Activated CD4-positive, alpha-beta memory T cell treated with anti-CD3 and anti-CD28 coated beads, Interleukin-2, amount 10 ng/mL, durations not matched to agents 7 days and 5 days (primary cell): ENCODE measurements at regions of chr11 and their contacts with region 1.

Region 1: GRCh38 chr11:48172818-48173609 is 43.6 kb upstream of the OR4B1 start:
- DNase-seq: peak; percentile 70
- H3K4me3 Mint-ChIP-seq: no peak overlapping the region
- H3K27ac Mint-ChIP-seq: no peak overlapping the region
- H3K4me1 Mint-ChIP-seq: peaks cover 31% of the 10 kb centered on the region
- H3K27me3 Mint-ChIP-seq: no peaks in the 10 kb centered on the region

Region 2: DNA sequence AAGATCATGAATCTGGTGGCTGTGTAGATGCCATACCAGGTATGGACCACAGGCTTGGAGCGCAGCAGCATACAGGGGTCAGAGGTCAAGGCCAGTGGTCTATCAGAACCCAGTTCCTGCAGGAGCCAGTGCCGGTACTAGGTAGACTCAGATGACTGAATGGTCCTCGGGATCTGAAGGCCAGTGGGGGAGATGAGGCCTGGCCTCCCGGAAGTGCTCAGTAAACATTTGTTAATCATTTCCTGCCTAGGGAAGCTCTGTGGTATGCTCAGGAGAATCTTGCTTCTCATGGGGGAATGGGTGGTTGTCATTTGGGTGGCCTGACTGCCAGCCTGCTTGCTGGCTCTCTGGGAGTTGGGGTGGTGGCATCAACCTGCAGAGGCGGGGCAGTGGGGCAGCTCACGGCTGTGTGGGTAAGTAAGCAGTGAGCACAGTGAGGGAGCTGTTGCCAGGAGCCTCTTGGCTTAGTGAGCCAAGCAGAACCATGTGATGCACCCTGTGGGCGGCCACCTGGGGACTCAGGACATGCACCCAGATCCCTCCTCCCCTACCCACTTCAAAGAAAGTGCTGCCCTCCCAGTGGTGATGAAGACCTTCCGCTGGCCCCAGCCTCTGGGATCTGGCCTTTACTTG is 159.6 kb before region 1 on chr11:
- CTCF ChIA-PET with region 1: no interaction called
- POLR2A ChIA-PET with region 1: no interaction called
- DNase-seq: peak; percentile 83
- H3K4me3 Mint-ChIP-seq: peak overlapping the region; percentile 69
- H3K27ac Mint-ChIP-seq: peak overlapping the region; percentile 99
- H3K4me1 Mint-ChIP-seq: peaks cover 91% of the 10 kb centered on the region
- H3K27me3 Mint-ChIP-seq: no peaks in the 10 kb centered on the region

Region 3: GRCh38 chr11:48161951-48162884 is 10.8 kb before region 1 on chr11:
- CTCF ChIA-PET with region 1: no interaction called
- POLR2A ChIA-PET with region 1: no interaction called
- DNase-seq: no peak
- H3K4me3 Mint-ChIP-seq: no peak overlapping the region
- H3K27ac Mint-ChIP-seq: peak overlapping the region; percentile 1
- H3K4me1 Mint-ChIP-seq: no peaks in the 10 kb centered on the region
- H3K27me3 Mint-ChIP-seq: no peaks in the 10 kb centered on the region

Region 4: DNA sequence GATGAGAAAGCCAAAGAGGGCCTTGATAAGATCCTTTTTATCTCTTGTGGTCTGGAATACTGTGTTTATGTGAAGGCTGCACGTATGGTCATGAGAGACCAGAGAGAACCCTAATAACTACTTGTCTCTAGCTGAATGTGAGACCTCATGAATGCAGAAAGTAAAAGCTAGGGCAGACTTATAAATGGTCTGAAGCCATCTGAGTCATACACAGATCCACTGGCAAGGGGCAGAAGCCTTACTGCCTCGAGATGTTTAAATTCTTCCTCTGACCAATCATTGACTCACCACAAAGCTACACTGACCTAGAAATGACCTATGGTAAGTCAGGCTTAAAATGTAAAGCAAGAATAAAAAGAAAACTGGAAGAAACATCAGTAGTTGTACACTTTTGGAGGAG is 20.9 kb after region 1 on chr11:
- CTCF ChIA-PET with region 1: no interaction called
- POLR2A ChIA-PET with region 1: no interaction called
- DNase-seq: no peak
- H3K4me3 Mint-ChIP-seq: no peak overlapping the region
- H3K27ac Mint-ChIP-seq: no peak overlapping the region
- H3K4me1 Mint-ChIP-seq: peaks cover 30% of the 10 kb centered on the region
- H3K27me3 Mint-ChIP-seq: peaks cover 11% of the 10 kb centered on the region

Region 5: GRCh38 chr11:48307760-48308386 is 134.9 kb after region 1 on chr11:
- CTCF ChIA-PET with region 1: interaction called, 16 read pairs
- POLR2A ChIA-PET with region 1: no interaction called
- DNase-seq: peak; percentile 76
- H3K4me3 Mint-ChIP-seq: no peak overlapping the region
- H3K27ac Mint-ChIP-seq: no peak overlapping the region
- H3K4me1 Mint-ChIP-seq: peaks cover 3% of the 10 kb centered on the region
- H3K27me3 Mint-ChIP-seq: peaks cover 9% of the 10 kb centered on the region